B cell (primary cell): ENCODE measurements at regions of chr6 and their contacts with region 1.

Region 1: GRCh38 chr6:35583893-35584688 is 71.4 kb upstream of the TULP1 start:
- DNase-seq: peak; percentile 82
- ATAC-seq: peak; percentile 63
- H3K4me3 ChIP-seq: no peak overlapping the region
- H3K4me3 Mint-ChIP-seq: no peak overlapping the region
- H3K27ac ChIP-seq: no peak overlapping the region
- H3K27ac Mint-ChIP-seq: no peak overlapping the region
- H3K4me1 ChIP-seq: no peaks in the 10 kb centered on the region
- H3K4me1 Mint-ChIP-seq: peaks cover 5% of the 10 kb centered on the region
- H3K27me3 ChIP-seq: no peaks in the 10 kb centered on the region
- H3K27me3 Mint-ChIP-seq: no peaks in the 10 kb centered on the region
- CTCF ChIP-seq: peak; percentile 91

Region 2: GRCh38 chr6:35522660-35523658 is 61.1 kb before region 1 on chr6:
- CTCF ChIA-PET with region 1: interaction called, 5 read pairs
- POLR2A ChIA-PET with region 1: no interaction called
- intact Hi-C with region 1: loop called (anchors 2 kb)
- DNase-seq: peak; percentile 80
- ATAC-seq: peak; percentile 92
- H3K4me3 ChIP-seq: peak overlapping the region; percentile 14 to 50 (median 41)
- H3K4me3 Mint-ChIP-seq: peak overlapping the region; percentile 77
- H3K27ac ChIP-seq: no peak overlapping the region
- H3K27ac Mint-ChIP-seq: no peak overlapping the region
- H3K4me1 ChIP-seq: peaks cover 3 to 9% of the 10 kb centered on the region in 2 donors
- H3K4me1 Mint-ChIP-seq: peaks cover 9% of the 10 kb centered on the region
- H3K27me3 ChIP-seq: peaks cover 0 to 5% (median 0%) of the 10 kb centered on the region in 4 experiments
- H3K27me3 Mint-ChIP-seq: no peaks in the 10 kb centered on the region
- CTCF ChIP-seq: peak; percentile 98

Region 3: DNA sequence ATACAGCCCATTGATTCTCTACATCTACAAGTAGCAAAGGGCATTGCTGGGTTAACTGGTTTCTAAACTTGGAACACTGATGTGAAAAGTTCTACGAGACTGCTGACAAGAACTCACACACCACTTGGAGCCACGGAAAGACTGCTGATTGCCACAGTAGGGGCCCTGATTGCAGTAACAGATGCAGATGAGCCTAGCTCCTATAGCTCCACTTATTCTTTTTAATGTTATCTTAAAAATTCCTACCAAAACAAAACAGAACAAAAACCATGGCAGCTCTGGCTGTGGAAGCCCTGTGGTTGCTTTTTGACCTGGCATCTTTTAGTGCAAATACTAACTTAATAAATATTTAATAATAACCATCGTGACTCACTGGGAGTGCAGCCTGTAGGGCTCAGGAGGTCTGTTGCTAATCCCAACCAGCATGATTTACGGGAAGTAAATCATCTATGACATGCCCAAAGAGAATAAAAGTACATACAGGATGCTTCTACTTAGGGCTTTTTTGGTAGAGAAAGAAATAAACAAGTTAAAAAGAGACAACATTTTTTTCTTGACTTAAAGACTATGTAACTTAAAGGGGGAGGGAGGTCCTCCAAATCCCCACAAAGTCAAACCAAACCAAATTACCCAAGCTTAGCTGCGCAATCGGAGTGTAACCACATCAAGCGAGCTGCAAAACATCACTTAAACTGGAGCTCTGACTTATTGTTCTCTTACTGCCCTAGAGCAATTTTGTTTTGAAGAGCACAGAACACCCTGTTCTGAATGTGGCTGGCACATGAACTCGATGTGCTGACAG is 17.4 kb after region 1 on chr6:
- CTCF ChIA-PET with region 1: interaction called, 17 read pairs
- POLR2A ChIA-PET with region 1: no interaction called
- intact Hi-C with region 1: no loop called
- DNase-seq: peak; percentile 18
- ATAC-seq: peak; percentile 24
- H3K4me3 ChIP-seq: peak overlapping the region in 4 of 5 experiments; percentile 5 to 34 (median 12)
- H3K4me3 Mint-ChIP-seq: peak overlapping the region; percentile 51
- H3K27ac ChIP-seq: peak overlapping the region; percentile 24
- H3K27ac Mint-ChIP-seq: peak overlapping the region; percentile 80
- H3K4me1 ChIP-seq: peaks cover 17 to 27% of the 10 kb centered on the region in 2 donors
- H3K4me1 Mint-ChIP-seq: peaks cover 38% of the 10 kb centered on the region
- H3K27me3 ChIP-seq: no peaks in the 10 kb centered on the region
- H3K27me3 Mint-ChIP-seq: no peaks in the 10 kb centered on the region
- CTCF ChIP-seq: no peak

Region 4: DNA sequence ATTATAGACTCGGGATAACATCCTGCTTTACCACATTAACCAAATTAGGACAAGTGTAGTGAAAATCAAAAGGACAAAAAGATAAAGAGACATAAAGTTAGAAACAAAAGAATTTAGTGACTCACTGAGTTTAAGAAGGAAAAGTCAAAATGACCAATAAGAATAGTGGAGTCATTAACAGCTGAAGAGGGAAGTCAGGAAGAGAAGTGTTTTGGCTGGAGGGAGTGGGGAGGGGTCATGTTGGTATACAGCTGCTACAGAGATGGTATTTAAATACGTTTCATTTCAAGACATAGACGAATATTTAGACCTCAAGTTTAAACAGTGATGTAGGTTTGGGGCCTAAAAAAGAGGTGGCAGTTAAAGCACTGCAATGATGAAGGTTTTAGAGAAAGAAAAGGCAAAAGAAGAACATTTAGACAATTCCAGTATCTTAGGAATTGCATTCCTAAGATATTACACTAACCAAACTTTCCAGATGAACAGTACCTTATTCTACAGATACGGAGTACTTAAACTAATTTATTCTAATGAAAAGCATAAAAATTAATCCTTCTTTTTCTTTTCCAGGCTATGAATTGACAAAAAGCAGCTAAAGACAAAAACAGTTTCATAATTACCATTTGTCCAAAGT is 94.0 kb after region 1 on chr6:
- CTCF ChIA-PET with region 1: no interaction called
- POLR2A ChIA-PET with region 1: no interaction called
- intact Hi-C with region 1: loop called (anchors 5 kb)
- DNase-seq: no peak
- ATAC-seq: no peak
- H3K4me3 ChIP-seq: no peak overlapping the region
- H3K4me3 Mint-ChIP-seq: no peak overlapping the region
- H3K27ac ChIP-seq: no peak overlapping the region
- H3K27ac Mint-ChIP-seq: no peak overlapping the region
- H3K4me1 ChIP-seq: no peaks in the 10 kb centered on the region
- H3K4me1 Mint-ChIP-seq: peaks cover 10% of the 10 kb centered on the region
- H3K27me3 ChIP-seq: no peaks in the 10 kb centered on the region
- H3K27me3 Mint-ChIP-seq: no peaks in the 10 kb centered on the region
- CTCF ChIP-seq: no peak

Region 5: GRCh38 chr6:35737413-35738211 is 153.5 kb after region 1 on chr6:
- CTCF ChIA-PET with region 1: interaction called, 369 read pairs
- POLR2A ChIA-PET with region 1: interaction called, 4 read pairs
- intact Hi-C with region 1: loop called (anchors 1 kb)
- DNase-seq: peak; percentile 81
- ATAC-seq: peak; percentile 69
- H3K4me3 ChIP-seq: no peak overlapping the region
- H3K4me3 Mint-ChIP-seq: no peak overlapping the region
- H3K27ac ChIP-seq: no peak overlapping the region
- H3K27ac Mint-ChIP-seq: peak overlapping the region; percentile 60
- H3K4me1 ChIP-seq: peaks cover 8 to 19% of the 10 kb centered on the region in 2 donors
- H3K4me1 Mint-ChIP-seq: peaks cover 22% of the 10 kb centered on the region
- H3K27me3 ChIP-seq: no peaks in the 10 kb centered on the region
- H3K27me3 Mint-ChIP-seq: no peaks in the 10 kb centered on the region
- CTCF ChIP-seq: peak; percentile 81

Region 6: GRCh38 chr6:36724514-36725390 is 1140.7 kb after region 1 on chr6:
- CTCF ChIA-PET with region 1: no interaction called
- POLR2A ChIA-PET with region 1: no interaction called
- intact Hi-C with region 1: no loop called
- DNase-seq: peak; percentile 63
- ATAC-seq: no peak
- H3K4me3 ChIP-seq: no peak overlapping the region
- H3K4me3 Mint-ChIP-seq: peak overlapping the region; percentile 1
- H3K27ac ChIP-seq: no peak overlapping the region
- H3K27ac Mint-ChIP-seq: peak overlapping the region; percentile 26
- H3K4me1 ChIP-seq: peaks cover 51 to 53% of the 10 kb centered on the region in 2 donors
- H3K4me1 Mint-ChIP-seq: peaks cover 58% of the 10 kb centered on the region
- H3K27me3 ChIP-seq: no peaks in the 10 kb centered on the region
- H3K27me3 Mint-ChIP-seq: no peaks in the 10 kb centered on the region
- CTCF ChIP-seq: peak; percentile 21